Heart right ventricle (tissue), 16 donors: ENCODE measurements at regions of chr17 and their contacts with region 1.

Region 1: DNA sequence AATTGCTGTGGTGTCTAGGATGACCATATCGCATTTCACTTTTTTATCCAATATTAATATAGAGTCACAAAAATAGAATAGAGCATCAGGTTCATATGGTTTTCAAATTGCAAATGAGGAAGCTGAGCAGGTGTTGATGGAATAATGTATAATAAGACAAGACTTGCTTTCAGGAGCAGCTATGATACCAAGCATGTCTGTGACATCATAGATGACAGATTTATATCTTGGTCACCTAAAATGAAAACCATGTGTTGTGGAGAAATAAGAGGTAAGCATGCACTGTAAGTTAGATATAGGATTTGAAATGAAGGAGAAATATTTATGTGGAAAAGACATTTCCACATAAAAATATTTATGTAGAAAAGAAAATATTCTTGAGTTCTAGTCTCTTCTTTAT is 8.6 kb downstream of the MEIOC start:
- DNase-seq: no peak
- ATAC-seq: no peak
- H3K4me3 ChIP-seq: no peak overlapping the region
- H3K27ac ChIP-seq: no peak overlapping the region
- H3K4me1 ChIP-seq: no peaks in the 10 kb centered on the region
- H3K27me3 ChIP-seq: peaks cover 0 to 8% (median 0%) of the 10 kb centered on the region in 7 donors
- CTCF ChIP-seq: no peak

Region 2: DNA sequence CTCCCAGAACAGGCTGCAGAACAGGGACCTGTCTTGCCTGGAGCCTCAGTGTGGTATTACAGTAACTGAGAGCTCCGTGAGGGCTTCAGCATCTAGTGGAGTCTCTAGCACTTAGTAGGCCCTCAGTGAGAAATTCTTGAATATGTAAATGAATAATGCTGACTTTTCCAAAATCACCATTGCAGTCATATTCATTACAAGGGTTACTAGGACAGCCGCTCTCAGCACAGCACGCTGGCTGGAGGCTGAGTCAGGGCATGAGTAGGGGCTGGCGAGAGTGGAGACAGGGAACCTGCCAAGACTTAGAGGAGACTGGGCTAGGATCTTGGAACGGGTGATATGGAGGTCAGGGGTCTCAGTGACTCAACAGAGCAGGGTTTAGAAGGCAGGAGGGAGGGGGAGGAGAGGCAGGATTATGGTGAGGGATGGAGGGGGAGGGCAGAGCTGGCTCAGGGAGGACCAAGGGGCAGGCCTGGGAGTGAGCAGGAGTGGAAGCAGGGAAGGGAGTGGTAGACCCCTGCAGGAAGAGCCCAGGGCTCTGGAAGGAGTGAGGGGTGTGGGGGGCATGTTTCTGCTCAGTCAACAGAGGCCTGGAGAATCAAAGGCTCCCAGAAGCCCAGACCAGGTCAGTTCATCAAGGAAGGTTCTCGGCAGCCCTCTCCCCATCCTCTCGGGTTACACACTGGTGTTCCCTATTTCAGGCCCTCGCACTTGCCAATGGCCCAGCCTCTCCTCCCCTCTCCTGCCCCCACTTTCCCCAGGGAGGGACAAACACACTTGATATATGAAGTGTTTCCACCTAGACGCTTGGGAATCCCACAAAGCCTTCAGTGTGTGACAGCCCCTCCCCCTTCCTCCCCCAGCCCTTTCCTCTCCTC is 65.3 kb before region 1 on chr17:
- intact Hi-C with region 1: loop called in 1 of 10 experiments (anchors 10 kb)
- DNase-seq: peak in 1 of 2 donors; percentile 42
- ATAC-seq: peak; percentile 34 to 81 (median 64)
- H3K4me3 ChIP-seq: no peak overlapping the region
- H3K27ac ChIP-seq: peak overlapping the region in 1 of 10 donors; percentile 25
- H3K4me1 ChIP-seq: no peaks in the 10 kb centered on the region
- H3K27me3 ChIP-seq: peaks cover 0 to 9% (median 0%) of the 10 kb centered on the region in 7 donors
- CTCF ChIP-seq: no peak

Region 3: GRCh38 chr17:44708401-44709181 is 43.7 kb after region 1 on chr17 and contains the start of gene DBF4B:
- intact Hi-C with region 1: no loop called
- DNase-seq: peak; percentile 53 to 92
- ATAC-seq: peak; percentile 77 to 95 (median 89)
- H3K4me3 ChIP-seq: peak within 1 kb of the TSS; percentile 58 to 93 (median 79)
- H3K27ac ChIP-seq: peak within 1 kb of the TSS; percentile 1 to 85 (median 74)
- H3K4me1 ChIP-seq: peaks cover 0 to 20% (median 15%) of the 10 kb centered on the region in 9 donors
- H3K27me3 ChIP-seq: peaks cover 0 to 12% (median 0%) of the 10 kb centered on the region in 7 donors
- CTCF ChIP-seq: no peak
- total RNA-seq, gene DBF4B: 2.9 to 5.5 (median 4.0) TPM

Region 4: DNA sequence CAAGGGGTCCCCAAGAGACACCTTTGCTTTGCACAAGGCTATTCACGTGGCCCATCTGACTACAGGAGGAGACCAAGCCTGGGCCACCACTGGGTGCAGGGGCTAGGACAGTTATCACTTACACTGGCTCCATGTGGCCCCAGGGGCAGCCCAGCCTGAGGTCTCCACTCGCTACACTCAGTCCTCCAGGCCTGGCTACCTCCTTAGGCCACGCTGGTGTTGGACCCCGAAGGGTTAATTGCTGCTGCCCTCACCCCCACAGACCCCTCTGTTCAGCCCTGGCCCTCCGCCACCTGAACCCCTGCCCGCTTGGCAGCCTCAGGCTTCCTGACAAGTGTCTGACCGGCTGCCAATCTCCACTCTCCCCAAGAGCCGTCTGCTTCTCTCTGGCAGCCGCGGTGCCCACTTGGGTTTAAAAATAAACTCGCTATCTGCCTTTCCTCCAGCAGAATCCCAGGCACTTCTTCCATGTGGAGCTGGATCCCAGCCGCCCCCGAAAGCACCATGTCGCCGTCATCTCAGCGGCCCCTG is 121.7 kb after region 1 on chr17:
- intact Hi-C with region 1: no loop called
- DNase-seq: peak; percentile 67 to 73
- ATAC-seq: peak; percentile 57 to 87 (median 84)
- H3K4me3 ChIP-seq: no peak overlapping the region
- H3K27ac ChIP-seq: peak overlapping the region in 9 of 10 donors; percentile 6 to 88 (median 70)
- H3K4me1 ChIP-seq: peaks cover 12 to 49% (median 35%) of the 10 kb centered on the region in 9 donors
- H3K27me3 ChIP-seq: no peaks in the 10 kb centered on the region
- CTCF ChIP-seq: no peak